AG04450 (cell line): ENCODE measurements at regions of chr3 and their contacts with region 1.

Region 1: DNA sequence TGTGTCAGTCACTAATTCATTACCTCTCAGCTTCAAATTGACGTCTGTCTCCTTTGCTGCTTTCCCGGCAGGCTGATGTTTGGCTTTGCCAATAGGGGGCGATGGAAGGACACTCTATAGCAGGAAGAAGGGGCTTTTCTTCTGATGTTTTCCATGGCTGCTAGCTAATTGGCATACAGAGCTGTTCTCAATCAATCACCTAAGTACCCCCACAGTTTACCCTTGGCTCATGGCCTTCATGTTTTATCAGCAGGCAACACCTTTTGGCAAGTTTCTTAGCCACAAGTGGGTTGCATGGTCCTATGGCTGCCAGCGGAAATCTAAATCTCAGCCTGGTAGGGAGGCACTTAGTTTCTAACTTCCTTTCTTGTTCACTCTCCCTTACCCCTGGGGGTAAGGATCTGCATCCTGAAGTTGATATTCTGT is 45.0 kb downstream of the ESYT3 start:
- DNase-seq: no peak
- H3K4me3 ChIP-seq: no peak overlapping the region
- H3K27ac ChIP-seq: no peak overlapping the region
- H3K27me3 ChIP-seq: no peaks in the 10 kb centered on the region
- CTCF ChIP-seq: peak; percentile 95

Region 2: DNA sequence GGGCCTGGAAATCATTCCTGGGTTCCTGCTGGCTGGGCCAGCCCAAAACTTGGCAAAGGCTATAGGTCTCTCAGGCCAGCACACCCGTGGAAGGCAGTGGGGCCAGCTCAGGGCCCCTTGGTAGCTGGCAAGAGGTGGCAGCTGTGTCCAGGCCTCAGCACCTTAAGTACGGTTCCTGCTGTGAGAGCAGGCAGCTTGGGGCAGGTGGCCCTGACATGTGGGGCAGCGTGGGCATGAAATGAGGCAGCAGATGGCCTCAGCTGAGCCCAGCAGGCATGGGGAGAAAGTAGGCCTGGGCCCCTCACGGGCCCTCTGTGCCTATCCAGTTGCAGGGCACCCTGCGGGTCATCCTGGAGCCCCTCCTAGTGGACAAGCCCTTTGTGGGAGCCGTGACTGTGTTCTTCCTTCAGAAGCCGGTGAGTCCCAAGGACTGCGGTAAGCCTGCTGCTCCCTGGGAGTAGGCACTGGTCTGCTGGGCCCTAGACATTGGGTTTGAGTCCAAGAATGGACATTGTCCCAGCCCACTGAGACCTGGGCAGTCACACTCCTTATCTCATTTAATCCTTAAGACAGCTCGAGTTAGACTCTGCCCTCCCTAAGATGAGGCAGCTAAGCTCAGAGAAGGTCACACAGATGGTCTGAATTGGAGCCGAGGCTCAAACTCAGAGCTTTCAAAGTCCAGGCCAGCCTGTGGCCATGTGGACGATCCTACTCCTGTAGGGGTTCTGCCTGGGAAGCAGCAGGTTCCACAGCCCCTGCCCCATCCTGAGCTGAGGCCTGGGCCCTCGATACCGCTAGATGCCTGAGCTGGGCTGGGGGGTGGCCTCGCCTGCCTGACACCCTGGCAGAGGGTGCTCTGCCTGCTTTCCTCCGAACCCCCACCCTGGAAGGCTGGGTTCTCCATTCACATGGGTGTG is 19.6 kb before region 1 on chr3:
- CTCF ChIA-PET with region 1: interaction called, 11 read pairs
- POLR2A ChIA-PET with region 1: no interaction called
- DNase-seq: no peak
- H3K4me3 ChIP-seq: no peak overlapping the region
- H3K27ac ChIP-seq: no peak overlapping the region
- H3K27me3 ChIP-seq: peaks cover 12% of the 10 kb centered on the region
- CTCF ChIP-seq: no peak

Region 3: DNA sequence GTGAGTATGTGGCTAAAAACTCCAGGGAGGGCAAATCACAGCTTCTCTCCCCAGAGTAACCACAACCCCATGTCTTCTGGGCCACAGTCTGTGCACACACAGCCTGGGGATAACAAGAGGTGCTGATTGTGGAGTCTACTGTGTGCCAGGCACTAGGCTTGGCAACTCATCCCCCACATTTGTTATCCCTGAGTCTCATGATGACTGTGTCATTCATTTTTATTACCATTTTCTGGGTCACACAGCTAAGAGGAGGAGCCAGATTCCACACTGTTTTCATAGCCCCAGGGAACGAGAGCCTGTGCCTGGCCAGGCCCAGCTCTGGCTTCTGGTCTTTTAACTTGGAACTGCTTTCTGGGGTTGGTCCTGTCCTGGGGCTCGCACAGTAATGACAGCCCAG is 10.6 kb before region 1 on chr3:
- CTCF ChIA-PET with region 1: interaction called, 18 read pairs
- POLR2A ChIA-PET with region 1: no interaction called
- DNase-seq: no peak
- H3K4me3 ChIP-seq: no peak overlapping the region
- H3K27ac ChIP-seq: no peak overlapping the region
- H3K27me3 ChIP-seq: peaks cover 16% of the 10 kb centered on the region
- CTCF ChIP-seq: no peak

Region 4: DNA sequence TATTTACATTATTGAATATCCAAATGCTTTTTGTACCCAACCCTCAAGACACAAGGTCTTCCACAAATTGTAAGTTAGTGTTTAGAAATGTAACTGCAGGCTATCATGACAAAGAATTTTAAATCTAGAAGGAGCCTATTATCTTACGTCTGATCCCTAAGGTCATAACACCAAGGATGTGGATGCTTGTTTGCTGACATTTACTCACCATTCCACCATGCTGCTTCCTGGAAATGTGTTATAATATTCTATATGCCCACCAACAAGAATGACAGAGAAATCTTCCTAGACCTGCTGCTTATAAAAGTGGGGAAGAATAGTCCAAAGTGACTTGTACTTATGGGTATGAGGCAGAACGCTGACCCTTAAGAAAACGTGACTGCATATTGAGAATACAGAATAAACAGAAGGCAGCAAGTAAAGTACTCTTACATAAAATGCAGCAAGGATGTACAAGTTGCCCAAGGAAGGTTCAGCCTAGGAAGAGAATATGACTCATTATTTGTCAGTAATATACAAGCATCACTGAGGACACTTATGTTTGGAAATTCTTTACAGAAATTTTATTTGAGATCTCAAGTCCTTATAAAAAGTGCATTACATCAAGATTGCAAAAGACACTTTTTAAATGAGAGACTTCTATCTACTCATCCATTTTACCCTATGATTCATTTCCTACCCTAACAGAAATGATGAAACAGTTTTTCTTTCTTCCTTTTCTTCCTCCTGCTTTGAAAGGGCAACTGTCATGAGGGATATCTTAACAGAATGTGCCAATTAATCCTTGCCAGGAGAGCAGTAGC is 14.6 kb after region 1 on chr3:
- CTCF ChIA-PET with region 1: interaction called, 22 read pairs
- POLR2A ChIA-PET with region 1: no interaction called
- DNase-seq: peak; percentile 27
- H3K4me3 ChIP-seq: no peak overlapping the region
- H3K27ac ChIP-seq: peak overlapping the region; percentile 53
- H3K27me3 ChIP-seq: no peaks in the 10 kb centered on the region
- CTCF ChIP-seq: no peak

Region 5: DNA sequence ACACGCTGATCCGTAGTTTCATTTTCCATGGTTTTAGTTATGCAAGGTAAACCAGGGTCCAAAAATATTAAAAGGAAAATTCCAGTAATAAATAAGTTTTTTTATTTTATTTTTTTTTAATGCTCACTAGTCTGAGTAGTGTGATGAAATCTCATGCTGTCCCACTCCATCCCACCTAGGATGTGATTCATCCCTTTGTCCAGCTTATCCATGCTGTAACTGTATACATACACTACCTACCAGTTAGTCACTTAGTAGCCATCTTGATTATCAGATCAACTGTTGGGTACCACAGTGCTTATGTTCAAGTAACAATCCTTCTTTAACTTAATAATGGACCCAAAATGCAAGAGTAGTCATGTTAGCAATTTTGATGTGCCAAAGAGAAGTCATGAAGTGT is 30.1 kb after region 1 on chr3:
- CTCF ChIA-PET with region 1: interaction called, 12 read pairs
- POLR2A ChIA-PET with region 1: no interaction called
- DNase-seq: no peak
- H3K4me3 ChIP-seq: no peak overlapping the region
- H3K27ac ChIP-seq: no peak overlapping the region
- H3K27me3 ChIP-seq: no peaks in the 10 kb centered on the region
- CTCF ChIP-seq: no peak

Region 6: DNA sequence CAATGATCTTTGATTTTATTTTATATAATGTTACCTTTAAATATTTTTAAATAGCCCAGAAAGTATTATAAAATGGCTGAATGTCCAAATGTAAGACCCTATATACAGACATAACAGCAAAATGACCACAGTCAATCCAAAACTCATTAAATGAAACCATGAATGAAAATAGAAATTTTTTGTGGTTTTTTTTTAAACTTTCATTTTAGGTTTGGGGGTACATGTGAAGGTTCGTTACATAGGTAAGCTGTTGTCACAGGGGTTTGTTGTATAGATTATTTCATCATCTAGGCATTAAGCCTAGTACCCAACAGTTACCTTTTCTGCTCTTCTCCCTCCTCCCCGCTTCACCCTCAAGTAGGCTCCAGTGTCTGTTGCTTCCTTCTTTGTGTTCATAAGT is 237.9 kb after region 1 on chr3:
- CTCF ChIA-PET with region 1: no interaction called
- POLR2A ChIA-PET with region 1: no interaction called
- DNase-seq: no peak
- H3K4me3 ChIP-seq: no peak overlapping the region
- H3K27ac ChIP-seq: no peak overlapping the region
- H3K27me3 ChIP-seq: no peaks in the 10 kb centered on the region
- CTCF ChIP-seq: no peak